Lower leg skin (tissue), 4 donors: ENCODE measurements at regions of chr6 and their contacts with region 1.

Region 1: DNA sequence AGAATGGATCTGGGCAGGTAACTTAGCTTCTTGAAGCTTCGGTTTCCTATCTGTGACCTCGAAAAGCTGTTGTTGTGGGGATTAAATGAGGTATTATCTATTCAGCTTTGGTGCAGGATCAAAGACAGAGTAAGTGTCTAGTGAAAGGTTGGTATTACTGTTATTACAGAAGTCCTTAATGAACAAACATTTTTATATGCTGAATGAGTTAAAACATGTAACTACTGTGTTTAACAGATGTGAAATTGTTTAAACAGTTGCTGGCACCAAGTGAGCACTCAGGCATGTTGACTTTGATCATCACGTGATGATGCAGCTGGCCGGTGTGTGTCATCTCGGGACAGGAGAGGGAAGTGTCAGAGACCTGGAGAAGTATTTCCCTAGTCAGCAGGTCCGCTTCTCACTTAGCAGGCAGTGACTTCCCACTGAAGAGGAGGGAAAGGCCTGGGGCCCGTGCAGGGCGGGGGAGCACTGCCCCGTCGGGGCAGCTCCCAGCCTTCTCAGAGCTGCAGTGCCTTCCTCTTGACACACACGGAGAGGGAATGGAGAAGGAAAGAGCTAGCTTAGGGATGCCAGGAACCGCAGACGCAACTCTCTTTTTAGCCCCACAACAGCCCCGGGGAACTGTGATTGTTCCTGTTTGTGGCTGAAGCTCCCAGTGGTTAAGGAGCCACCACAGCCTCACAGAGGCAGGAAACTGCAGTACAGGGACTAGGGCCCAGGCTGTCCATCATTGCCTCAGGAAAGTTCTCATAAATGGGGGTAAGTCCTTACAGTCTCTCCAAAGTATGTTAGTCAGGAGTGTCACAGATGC is 18.0 kb downstream of the TUBB2A start:
- DNase-seq: peak in 1 of 2 donors; percentile 49
- H3K4me3 ChIP-seq: no peak overlapping the region
- CTCF ChIP-seq: no peak
- POLR2A ChIP-seq: no peak

Region 2: DNA sequence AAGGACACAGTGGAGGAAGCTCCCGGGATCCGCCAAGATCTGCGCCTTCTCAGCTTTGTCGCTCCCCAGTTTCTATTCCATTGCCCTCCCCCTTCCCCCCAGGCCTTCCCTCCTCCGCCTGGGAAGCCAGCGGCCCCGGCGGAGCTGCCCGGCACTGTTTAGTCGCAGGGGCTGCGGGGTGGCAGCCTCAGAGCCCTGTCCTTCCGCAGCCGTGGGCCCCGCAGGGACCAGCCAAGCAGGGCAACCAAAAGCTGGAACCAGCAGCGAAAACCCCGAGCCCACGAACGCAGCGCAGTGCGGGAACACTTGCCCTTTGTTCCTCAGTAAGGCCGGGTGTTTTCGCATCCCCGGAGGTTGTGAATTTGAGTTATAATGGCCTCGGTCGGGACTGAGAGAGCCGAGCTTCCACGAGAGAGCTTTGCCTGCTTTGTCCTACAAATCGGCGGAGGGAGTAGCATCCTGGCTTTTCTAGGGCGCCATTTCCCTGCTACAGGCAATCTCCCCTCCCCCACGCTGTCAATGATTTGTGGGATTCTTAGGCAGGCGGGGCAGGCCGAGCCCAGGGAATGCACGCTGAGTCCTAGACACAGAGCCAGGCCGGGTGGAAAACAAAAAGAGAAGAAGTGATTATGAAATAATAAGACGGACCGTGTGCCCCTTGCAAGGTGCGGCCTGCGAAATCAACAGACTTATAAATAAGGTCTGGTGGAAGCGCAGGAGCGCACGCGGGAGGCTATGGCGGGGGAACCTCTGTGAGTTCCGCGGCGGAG is 92.1 kb after region 1 on chr6:
- intact Hi-C with region 1: loop called (anchors 10 kb)
- DNase-seq: peak; percentile 73 to 92
- H3K4me3 ChIP-seq: peak overlapping the region; percentile 47
- CTCF ChIP-seq: no peak
- POLR2A ChIP-seq: no peak